ENCODE measurements at regions of chr1 and their contacts with region 1.

Region 1: DNA sequence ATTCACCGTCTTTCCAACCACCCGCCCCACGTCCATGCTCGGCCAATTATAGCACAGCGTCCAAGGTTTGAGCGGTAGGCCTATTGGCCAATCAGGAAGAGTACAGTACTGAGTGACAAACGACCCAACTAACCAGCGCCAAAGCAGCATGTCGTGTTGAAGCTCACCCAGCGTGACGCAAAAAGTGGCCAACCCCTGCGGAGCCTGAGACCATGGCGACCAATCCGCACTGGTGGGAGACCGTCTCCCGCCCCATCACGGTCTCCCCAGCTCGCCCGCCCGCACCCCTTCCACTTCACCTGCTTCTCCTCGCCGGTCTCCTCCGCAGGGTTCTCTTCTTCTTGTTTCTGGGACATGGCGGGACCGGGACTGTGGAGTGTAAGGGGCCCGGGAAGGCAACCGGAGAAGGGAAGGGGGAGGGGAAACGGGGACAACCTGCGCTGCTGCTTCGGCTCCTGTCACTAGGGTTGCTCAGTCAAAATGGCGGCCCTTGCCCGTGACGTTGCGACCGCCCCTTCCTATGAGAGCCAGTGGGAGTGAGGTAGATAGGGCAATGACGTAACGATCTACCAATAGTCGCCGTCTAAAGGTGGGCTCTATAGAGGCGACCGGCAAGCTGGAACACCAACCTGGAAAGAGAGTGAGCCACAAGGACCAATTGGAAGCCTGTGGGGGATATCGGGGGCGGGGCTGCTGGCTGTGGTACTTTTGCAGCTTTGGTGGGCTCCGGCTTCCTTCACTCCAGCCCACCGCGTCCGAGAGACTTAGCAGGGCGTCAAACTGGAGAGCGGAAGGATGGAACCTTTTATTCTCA is at the start of gene ENSA:
- DNase-seq: peak; percentile 92
- H3K4me3 ChIP-seq: peak within 1 kb of the TSS; percentile 55 to 90 (median 72)
- H3K27ac ChIP-seq: peak within 1 kb of the TSS; percentile 95
- H3K4me1 ChIP-seq: peaks cover 47% of the 10 kb centered on the region
- H3K27me3 ChIP-seq: no peaks in the 10 kb centered on the region
- CTCF ChIP-seq: no peak
- polyA plus RNA-seq, gene ENSA: 76.8 to 157 TPM (median 102 TPM) in 3 replicates

Region 2: DNA sequence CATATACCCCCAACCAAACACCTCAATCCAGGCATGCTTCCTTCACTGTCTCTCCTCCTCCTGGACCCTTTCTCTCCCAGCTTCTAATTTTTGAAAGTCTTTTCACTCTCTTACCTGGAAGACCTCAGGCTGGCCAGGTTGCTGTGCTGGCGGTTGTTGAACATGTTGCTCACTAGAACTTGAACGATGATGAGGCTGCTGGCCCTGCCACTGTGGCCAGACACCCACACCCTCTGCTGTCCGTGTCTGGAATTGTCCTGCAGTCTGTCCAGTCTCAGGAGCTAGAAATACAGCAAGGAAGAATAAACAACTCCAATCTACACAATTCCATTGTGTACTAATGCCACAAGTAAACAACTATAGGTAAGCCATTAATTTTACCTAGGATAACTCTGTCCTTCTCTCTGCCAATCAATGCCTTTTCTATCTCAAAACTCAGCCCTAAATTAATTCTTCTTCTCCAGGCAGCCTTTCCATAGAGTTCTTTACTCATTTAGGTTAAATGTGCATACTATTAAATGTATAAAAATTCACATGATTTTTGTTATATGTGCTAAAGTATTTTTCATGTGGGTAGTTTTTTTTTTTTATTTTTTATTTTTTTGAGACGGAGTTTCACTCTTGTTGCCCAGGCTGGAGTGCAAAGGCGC is 183.9 kb after region 1 on chr1:
- dilution Hi-C with region 1: loop called (anchors 25 kb)
- DNase-seq: no peak
- H3K4me3 ChIP-seq: no peak overlapping the region
- H3K27ac ChIP-seq: no peak overlapping the region
- H3K4me1 ChIP-seq: peaks cover 29% of the 10 kb centered on the region
- H3K27me3 ChIP-seq: no peaks in the 10 kb centered on the region
- CTCF ChIP-seq: peak; percentile 87 to 92 (median 91)

Measured in keratinocyte (primary cell).